Activated CD8-positive, alpha-beta T cell treated with anti-CD3 and anti-CD28 coated beads for 36 hours (primary cell): ENCODE measurements at regions of chr5 and their contacts with region 1.

Region 1: DNA sequence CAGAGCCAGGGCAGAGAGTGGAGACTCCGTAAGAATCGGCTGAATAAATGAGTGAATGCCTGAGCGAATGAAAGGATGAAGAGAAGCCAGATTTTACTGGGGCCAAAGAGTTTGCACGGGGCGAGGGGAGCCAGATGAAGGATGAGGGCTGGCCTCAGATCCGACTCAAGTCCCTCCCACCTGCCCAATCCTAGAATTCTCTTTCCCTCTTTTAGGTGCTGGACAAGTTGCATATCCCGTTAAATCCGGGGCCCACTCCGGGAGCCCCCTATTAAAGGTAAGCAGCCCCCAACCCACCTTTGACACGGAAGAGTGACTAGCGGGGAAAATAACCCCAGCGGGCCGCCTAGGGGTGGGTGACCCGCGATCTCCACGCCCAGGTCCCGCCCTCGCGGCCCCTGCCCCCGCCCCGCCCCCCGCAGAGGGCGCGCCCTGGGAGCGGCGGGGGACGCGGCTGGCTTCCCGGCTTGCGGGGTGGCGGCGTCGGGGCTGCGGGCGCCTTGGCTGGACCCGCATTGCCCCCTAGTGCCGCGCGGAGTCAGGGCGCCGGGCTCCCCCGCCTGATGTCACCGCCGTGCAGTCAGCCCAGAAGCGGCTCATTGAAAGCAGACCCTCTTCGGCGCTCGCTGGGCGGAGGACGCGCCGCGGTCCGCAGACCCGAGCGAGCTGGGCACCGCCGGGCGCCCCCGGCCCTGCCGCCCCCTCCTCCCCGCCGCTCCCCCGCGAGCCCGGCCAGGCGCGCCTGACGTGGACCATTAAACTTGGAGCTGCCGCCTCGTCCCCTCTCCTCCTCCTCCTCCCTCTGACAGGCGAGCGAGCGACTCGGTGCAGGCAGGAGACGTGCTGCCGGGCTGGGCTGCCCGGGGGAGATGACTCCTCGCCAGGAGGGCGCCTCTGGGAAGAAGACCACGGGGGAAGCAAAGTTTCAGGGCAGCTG is at the start of gene ADRA1B:
- DNase-seq: peak; percentile 64
- ATAC-seq: peak; percentile 95
- H3K4me3 Mint-ChIP-seq: no peak within 1 kb of the TSS
- H3K27ac Mint-ChIP-seq: no peak within 1 kb of the TSS
- H3K4me1 Mint-ChIP-seq: peaks cover 5% of the 10 kb centered on the region
- H3K27me3 Mint-ChIP-seq: peaks cover 51% of the 10 kb centered on the region
- CTCF ChIP-seq: peak; percentile 69
- total RNA-seq, gene ADRA1B: not detected

Region 2: DNA sequence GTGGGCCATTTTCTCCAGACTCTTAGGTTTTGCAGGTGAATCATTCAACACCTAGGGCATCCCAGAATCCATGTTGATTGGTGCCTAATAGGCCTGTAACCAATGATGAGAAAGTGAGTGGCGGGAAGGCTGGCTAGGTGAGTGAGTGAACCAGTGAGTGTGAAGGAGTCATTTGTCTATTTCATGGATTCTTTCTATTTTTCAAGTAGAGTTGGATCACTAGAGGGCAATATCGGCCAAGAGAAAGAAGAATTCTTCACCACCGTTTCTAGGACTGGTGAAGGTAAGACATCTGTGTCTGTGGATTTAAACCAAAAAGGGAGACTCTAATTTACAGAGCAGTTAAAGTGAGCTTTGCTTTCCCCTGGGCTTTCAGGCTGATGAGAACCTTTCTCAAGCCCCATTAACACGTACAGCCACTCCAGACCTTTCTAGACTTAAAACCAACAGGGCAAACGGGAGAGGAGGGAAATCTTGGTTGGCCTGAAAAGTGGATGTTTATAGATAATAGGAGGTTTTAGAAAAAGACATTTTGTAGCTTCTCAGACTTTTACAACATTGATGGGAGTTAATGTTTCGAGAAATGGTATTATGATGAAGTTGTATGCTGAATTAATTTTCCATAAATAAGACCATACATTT is 471.6 kb before region 1 on chr5:
- CTCF ChIA-PET with region 1: interaction called, 12 read pairs
- POLR2A ChIA-PET with region 1: no interaction called
- intact Hi-C with region 1: loop called (anchors 10 kb)
- DNase-seq: no peak
- ATAC-seq: peak; percentile 37
- H3K4me3 Mint-ChIP-seq: no peak overlapping the region
- H3K27ac Mint-ChIP-seq: no peak overlapping the region
- H3K4me1 Mint-ChIP-seq: no peaks in the 10 kb centered on the region
- H3K27me3 Mint-ChIP-seq: peaks cover 7% of the 10 kb centered on the region
- CTCF ChIP-seq: peak; percentile 38

Region 3: DNA sequence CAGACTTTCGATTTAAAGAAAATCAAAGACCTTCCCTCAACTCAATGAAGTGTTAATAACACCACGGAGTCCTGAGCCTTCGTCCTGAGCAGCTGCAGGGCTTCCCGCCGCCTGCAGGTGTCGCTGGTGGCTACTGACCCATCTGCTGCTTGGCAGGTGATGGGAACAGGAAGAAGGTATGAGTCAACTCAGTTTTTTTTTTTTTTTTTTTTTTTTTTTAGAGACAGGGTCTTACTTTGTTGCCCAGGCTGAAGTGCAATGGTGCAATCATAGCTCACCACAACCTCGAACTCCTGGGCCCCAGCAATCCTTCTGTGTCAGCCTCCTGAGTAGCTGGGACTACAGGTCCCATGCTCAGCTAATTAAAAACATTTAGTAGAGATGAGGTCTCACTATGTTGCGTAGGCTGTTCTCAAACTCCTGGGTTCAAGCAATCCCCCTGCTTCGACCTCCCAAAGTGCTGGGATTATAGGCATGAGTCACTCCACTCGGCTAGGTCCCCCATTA is 400.2 kb before region 1 on chr5:
- CTCF ChIA-PET with region 1: interaction called, 5 read pairs
- POLR2A ChIA-PET with region 1: no interaction called
- intact Hi-C with region 1: loop called (anchors 10 kb)
- DNase-seq: peak; percentile 82
- ATAC-seq: peak; percentile 99
- H3K4me3 Mint-ChIP-seq: no peak overlapping the region
- H3K27ac Mint-ChIP-seq: no peak overlapping the region
- H3K4me1 Mint-ChIP-seq: peaks cover 8% of the 10 kb centered on the region
- H3K27me3 Mint-ChIP-seq: peaks cover 7% of the 10 kb centered on the region
- CTCF ChIP-seq: peak; percentile 86